ENCODE measurements at regions of chr5 and their contacts with region 1.

Region 1: GRCh38 chr5:129767906-129768380 is 20.0 kb downstream of the MINAR2 start:
- DNase-seq: peak; percentile 76
- H3K4me3 Mint-ChIP-seq: no peak overlapping the region
- H3K27ac Mint-ChIP-seq: no peak overlapping the region
- H3K4me1 Mint-ChIP-seq: peaks cover 2% of the 10 kb centered on the region
- H3K27me3 Mint-ChIP-seq: peaks cover 3% of the 10 kb centered on the region

Region 2: GRCh38 chr5:128213340-128213739 is 1554.6 kb before region 1 on chr5:
- CTCF ChIA-PET with region 1: interaction called, 13 read pairs
- POLR2A ChIA-PET with region 1: no interaction called
- intact Hi-C with region 1: no loop called
- DNase-seq: peak; percentile 45
- H3K4me3 Mint-ChIP-seq: no peak overlapping the region
- H3K27ac Mint-ChIP-seq: no peak overlapping the region
- H3K4me1 Mint-ChIP-seq: no peaks in the 10 kb centered on the region
- H3K27me3 Mint-ChIP-seq: peaks cover 4% of the 10 kb centered on the region

Region 3: GRCh38 chr5:128913551-128913950 is 854.4 kb before region 1 on chr5:
- CTCF ChIA-PET with region 1: interaction called, 4 read pairs
- POLR2A ChIA-PET with region 1: no interaction called
- intact Hi-C with region 1: loop called (anchors 2 kb)
- DNase-seq: no peak
- H3K4me3 Mint-ChIP-seq: no peak overlapping the region
- H3K27ac Mint-ChIP-seq: no peak overlapping the region
- H3K4me1 Mint-ChIP-seq: no peaks in the 10 kb centered on the region
- H3K27me3 Mint-ChIP-seq: peaks cover 9% of the 10 kb centered on the region

Region 4: DNA sequence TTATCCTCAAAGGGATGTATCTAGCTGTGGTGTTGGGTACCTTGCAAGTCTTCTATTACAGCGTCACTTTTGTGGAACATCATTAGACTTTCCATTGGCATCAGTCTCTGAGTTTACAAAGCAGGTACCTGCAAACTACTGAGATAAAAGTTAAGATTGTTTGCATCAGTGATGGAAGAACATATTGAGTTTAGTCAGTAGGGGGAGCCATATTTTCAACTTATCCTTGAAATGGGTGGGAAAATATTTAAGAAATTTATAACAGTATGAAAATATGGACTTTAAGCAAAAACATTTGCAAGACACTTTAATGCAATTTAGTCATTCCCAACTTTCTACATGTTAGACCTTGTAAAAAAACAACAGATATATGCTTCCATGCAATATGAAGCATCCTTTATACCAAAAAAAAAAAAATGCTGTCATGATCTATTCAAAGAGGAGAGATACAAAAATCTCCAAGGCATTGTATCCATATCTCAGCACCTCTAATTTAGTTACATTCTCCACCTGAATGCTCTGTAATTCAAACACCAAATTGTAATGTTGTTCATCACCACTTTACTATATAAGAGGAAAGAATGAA is 406.4 kb before region 1 on chr5:
- CTCF ChIA-PET with region 1: no interaction called
- POLR2A ChIA-PET with region 1: no interaction called
- intact Hi-C with region 1: loop called (anchors 10 kb)
- DNase-seq: no peak
- H3K4me3 Mint-ChIP-seq: no peak overlapping the region
- H3K27ac Mint-ChIP-seq: no peak overlapping the region
- H3K4me1 Mint-ChIP-seq: no peaks in the 10 kb centered on the region
- H3K27me3 Mint-ChIP-seq: no peaks in the 10 kb centered on the region

Region 5: GRCh38 chr5:129664337-129664937 is 103.5 kb before region 1 on chr5:
- CTCF ChIA-PET with region 1: interaction called, 16 read pairs
- POLR2A ChIA-PET with region 1: no interaction called
- intact Hi-C with region 1: loop called (anchors 1 kb)
- DNase-seq: peak; percentile 29
- H3K4me3 Mint-ChIP-seq: no peak overlapping the region
- H3K27ac Mint-ChIP-seq: no peak overlapping the region
- H3K4me1 Mint-ChIP-seq: no peaks in the 10 kb centered on the region
- H3K27me3 Mint-ChIP-seq: no peaks in the 10 kb centered on the region

Region 6: DNA sequence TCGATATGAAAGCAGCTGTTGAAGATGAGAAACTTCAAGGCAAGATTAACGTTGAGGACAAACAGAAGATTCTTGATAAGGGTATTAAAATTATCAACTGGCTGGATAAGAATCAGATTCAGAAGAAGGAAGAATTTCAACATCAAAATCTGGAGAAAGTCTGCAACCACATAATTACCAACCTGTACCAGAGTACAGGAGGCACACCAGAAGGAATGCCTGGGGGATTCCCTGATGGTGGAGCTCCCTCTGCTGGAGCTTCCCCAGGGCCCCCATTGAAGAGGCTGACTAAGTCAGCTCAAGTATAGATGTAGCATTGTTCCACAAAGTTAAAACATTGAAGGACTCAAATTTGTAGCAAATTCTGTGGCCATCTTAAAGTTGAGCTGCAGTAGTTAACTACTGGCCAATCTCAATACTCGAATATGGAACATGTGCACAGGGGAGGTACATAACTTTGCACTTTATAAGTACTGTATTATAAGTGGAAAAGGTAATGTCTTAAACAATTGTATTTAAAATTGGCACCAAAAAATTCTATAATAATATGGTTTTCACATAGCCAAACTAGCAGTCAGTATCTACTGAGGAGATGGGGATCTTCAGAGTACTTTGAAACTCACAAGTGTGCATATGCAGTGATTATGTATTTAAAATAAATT is 373.8 kb after region 1 on chr5:
- CTCF ChIA-PET with region 1: interaction called, 5 read pairs
- POLR2A ChIA-PET with region 1: no interaction called
- intact Hi-C with region 1: loop called (anchors 2 kb)
- DNase-seq: peak; percentile 26
- H3K4me3 Mint-ChIP-seq: no peak overlapping the region
- H3K27ac Mint-ChIP-seq: no peak overlapping the region
- H3K4me1 Mint-ChIP-seq: no peaks in the 10 kb centered on the region
- H3K27me3 Mint-ChIP-seq: peaks cover 1% of the 10 kb centered on the region

Measured in activated CD4-positive, alpha-beta memory T cell treated with anti-CD3 and anti-CD28 coated beads for 36 hours (primary cell).